ENCODE measurements at regions of chr1 and their contacts with region 1.

Region 1: GRCh38 chr1:210328746-210329503 is at the start of gene HHAT:
- DNase-seq: peak; percentile 80
- H3K4me3 ChIP-seq: peak within 1 kb of the TSS; percentile 76
- H3K27ac ChIP-seq: peak within 1 kb of the TSS; percentile 75
- H3K4me1 ChIP-seq: peaks cover 56% of the 10 kb centered on the region
- CTCF ChIP-seq: 0 out of 2 replicates have a peak, but pooled peaks have one; percentile 30
- total RNA-seq, gene HHAT: 5.2 and 5.4 TPM in 2 replicates

Region 2: GRCh38 chr1:210200124-210200736 is 128.7 kb before region 1 on chr1:
- CTCF ChIA-PET with region 1: no interaction called
- POLR2A ChIA-PET with region 1: no interaction called
- intact Hi-C with region 1: no loop called
- DNase-seq: no peak
- H3K4me3 ChIP-seq: no peak overlapping the region
- H3K27ac ChIP-seq: no peak overlapping the region
- H3K4me1 ChIP-seq: no peaks in the 10 kb centered on the region
- CTCF ChIP-seq: no peak; the same call in 1 of the 2 replicates

Region 3: DNA sequence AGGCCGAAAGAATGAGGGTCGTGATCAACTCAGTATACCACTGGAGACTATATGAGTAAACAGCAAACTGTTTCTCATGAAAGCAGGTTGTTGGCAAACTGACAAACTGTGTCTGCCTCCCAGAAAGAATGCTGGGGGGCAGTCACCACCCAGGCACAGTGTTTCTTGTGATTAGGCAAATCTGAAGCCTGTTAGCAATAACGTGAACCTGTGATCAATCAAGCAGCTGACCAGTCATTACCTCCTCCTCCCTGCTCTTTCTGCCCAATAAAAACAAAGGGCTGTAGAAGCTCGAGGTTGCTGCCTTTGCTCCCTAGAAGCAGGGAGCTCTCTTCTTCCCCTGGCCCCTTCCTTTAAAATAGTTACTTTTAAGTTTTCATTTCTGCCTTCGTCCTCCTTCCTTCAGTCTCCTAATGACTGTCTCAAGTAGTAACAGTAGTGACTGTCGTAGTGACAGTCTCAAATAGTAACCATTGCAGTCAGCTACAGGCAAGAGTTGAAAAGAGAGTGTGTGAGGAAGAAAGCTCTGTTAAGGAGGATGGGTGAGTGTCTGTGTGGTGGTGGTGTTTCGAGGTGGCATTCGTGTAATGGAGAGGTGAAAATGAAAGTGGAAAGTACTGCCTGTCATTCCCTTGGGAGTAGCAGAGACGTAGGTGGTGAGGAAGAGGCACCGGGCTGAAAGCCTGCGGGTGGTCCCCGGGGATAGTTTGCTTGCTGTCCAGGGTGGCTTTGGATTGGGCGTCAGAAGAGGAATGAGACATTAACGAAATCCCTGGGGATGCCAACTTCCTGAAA is 14.3 kb after region 1 on chr1:
- CTCF ChIA-PET with region 1: interaction called, 4 read pairs
- POLR2A ChIA-PET with region 1: interaction called, 25 read pairs
- intact Hi-C with region 1: no loop called
- DNase-seq: peak; percentile 69
- H3K4me3 ChIP-seq: peak overlapping the region; percentile 53
- H3K27ac ChIP-seq: no peak overlapping the region
- H3K4me1 ChIP-seq: peaks cover 43% of the 10 kb centered on the region
- CTCF ChIP-seq: no peak

Region 4: GRCh38 chr1:210373885-210374599 is 45.1 kb after region 1 on chr1:
- CTCF ChIA-PET with region 1: no interaction called
- POLR2A ChIA-PET with region 1: interaction called, 3 read pairs
- intact Hi-C with region 1: loop called (anchors 2 kb)
- DNase-seq: peak; percentile 61
- H3K4me3 ChIP-seq: no peak overlapping the region
- H3K27ac ChIP-seq: peak overlapping the region; percentile 47
- H3K4me1 ChIP-seq: no peaks in the 10 kb centered on the region
- CTCF ChIP-seq: peak; percentile 90

Region 5: GRCh38 chr1:210415846-210416448 is 87.0 kb after region 1 on chr1:
- CTCF ChIA-PET with region 1: no interaction called
- POLR2A ChIA-PET with region 1: no interaction called
- intact Hi-C with region 1: no loop called
- DNase-seq: no peak
- H3K4me3 ChIP-seq: no peak overlapping the region
- H3K27ac ChIP-seq: no peak overlapping the region
- H3K4me1 ChIP-seq: no peaks in the 10 kb centered on the region
- CTCF ChIP-seq: no peak

Region 6: DNA sequence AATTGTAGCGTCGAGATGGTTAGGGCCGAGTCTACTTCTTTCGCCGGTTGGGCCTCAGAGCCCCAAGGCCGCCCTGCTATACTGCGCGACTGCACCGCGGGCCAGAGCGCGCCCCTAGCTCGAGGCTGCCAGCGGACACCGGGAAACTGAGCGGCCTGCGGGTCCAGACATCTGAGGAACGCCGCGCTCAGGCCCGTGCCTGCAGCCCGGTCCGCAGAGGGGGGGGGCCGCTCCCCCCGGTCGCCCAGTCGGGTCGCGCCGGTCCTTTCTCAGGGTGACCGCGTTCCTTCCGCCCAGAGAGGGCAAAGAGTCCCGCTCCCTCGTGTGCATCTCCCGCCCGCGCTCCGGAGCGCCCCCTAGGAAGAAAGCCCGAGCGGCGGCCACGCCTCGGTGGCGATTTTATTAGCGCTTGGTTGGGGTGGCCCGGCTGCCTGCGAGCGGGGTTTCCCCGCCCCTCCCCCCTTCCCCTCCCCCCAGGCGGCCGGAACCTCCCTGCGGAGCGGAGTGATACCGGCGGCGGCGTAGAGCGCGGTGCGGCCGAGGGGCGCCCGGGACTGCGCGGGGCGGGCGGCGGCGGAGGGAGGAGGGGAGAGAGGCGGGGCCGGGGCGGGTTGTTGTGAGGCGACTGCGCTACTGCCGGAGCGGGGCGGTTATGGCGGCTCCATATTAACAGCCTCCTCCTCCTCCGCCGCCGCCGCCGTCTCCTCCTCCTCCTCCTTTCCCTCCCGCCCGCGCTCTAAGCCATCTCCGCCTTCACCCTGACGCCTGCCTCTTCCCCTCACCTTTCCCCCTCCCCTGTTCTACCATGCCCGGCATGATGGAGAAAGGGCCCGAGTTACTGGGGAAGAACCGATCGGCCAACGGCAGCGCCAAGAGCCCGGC is 930.1 kb after region 1 on chr1 and contains the start of gene RCOR3:
- CTCF ChIA-PET with region 1: no interaction called
- POLR2A ChIA-PET with region 1: no interaction called
- intact Hi-C with region 1: loop called (anchors 5 kb)
- DNase-seq: peak; percentile 92
- H3K4me3 ChIP-seq: peak within 1 kb of the TSS; percentile 87
- H3K27ac ChIP-seq: peak within 1 kb of the TSS; percentile 96
- H3K4me1 ChIP-seq: peaks cover 16% of the 10 kb centered on the region
- CTCF ChIP-seq: peak; percentile 67
- total RNA-seq, gene RCOR3: 32.3 and 34.8 TPM in 2 replicates

Region 7: DNA sequence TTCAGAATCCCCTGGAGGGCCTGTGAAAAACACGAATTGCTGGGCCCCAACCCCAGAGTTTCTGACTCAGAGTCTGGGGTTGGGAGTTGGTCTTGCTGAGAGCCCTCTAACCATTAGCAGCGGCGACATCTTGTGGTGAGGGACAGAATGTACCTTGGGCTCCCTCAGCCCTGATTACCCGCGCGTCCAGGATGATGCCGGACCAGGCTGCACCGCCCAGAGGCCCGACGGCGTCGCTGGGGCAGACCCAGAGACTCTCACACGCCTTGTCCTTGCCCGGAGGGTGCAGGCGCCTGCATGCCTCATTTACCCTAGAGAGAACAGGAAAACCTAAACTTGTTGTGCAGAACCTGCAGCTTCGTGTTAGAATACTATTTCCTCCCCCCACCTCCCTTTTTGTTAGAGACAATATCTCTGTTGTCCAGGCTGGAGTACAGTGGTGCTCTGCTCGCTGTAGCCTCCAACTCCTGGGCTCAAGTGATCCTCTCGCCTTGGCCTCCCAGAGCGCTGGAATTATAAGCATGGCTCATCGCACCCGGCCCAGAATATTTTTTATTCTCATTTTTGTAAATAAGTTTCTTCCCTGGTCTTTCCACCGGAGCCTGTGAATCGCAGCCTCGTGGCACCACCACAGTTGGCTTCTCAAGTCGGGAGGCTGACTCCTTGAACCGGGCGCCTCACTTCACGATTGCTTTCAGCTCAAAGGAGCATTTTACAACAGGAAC is 1185.3 kb after region 1 on chr1:
- CTCF ChIA-PET with region 1: no interaction called
- POLR2A ChIA-PET with region 1: no interaction called
- intact Hi-C with region 1: loop called (anchors 5 kb)
- DNase-seq: peak; percentile 84
- H3K4me3 ChIP-seq: peak overlapping the region; percentile 7
- H3K27ac ChIP-seq: no peak overlapping the region
- H3K4me1 ChIP-seq: peaks cover 45% of the 10 kb centered on the region
- CTCF ChIP-seq: peak; percentile 86

Measured in OCI-LY7 (cell line).